ENCODE measurements at regions of chr14 and their contacts with region 1.

Region 1: DNA sequence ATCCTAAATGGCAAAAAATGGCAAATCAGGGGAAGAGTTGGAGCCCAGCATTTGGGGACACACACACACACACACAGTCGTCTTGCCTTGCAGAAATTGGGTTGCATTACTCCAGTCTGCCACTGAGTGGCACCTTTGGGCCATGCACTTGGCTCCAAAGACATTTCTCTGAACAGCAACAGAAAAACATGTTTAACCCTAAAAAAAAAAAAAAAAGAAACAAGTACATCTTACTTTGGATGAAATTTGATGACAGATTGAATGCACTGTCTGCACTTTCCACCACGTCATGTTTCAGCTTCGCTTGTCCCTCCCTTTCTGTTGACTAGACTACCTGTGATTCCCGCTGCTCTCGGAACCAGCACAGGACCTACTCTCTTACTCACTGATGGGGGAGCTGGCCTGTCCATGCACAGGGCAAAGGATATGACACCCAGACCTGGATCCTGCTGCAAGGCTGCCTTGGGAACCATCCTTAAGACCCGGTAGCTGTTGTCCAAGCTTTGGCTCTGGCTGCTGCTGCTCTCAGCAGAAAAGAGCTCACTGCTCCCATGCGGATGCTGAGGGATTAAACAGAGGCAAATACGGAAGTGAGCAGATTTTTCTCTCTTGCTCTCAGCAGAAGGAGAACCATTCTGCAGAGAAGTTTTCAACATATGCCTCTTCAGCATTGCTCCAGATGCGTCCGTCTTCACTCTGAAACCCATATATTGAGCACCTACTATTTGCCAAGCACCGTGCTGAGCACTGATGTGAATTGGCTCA is 376.8 kb downstream of the DPF3 start:
- DNase-seq: peak; percentile 63 to 65
- ATAC-seq: peak; percentile 84 to 92 (median 86)
- H3K4me3 ChIP-seq: no peak overlapping the region
- H3K27ac ChIP-seq: no peak overlapping the region
- H3K4me1 ChIP-seq: peaks cover 2% of the 10 kb centered on the region
- H3K27me3 ChIP-seq: no peaks in the 10 kb centered on the region
- CTCF ChIP-seq: peak; percentile 87

Region 2: DNA sequence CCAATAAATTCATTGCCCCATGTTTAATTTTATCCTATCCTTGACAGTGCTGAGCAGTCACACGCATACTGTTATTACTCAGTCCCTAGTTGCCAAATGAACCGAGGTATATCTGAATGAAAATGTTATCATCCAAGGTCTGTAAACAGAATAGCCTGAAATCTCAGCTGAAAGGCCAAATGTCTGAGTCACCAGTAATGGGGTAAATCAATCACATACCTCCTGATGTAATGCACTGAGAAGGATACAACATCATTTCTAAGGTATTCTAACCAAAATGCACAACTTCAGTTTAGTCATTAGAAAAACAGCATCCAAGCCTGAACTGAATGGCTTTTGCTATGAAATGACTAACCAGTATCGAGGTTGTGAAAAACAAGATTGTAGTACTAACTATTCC is 148.1 kb after region 1 on chr14:
- intact Hi-C with region 1: loop called in 1 of 2 experiments (anchors 5 kb)
- DNase-seq: no peak
- ATAC-seq: peak in 3 of 4 donors; percentile 33 to 53 (median 41)
- H3K4me3 ChIP-seq: no peak overlapping the region
- H3K27ac ChIP-seq: peak overlapping the region; percentile 1
- H3K4me1 ChIP-seq: no peaks in the 10 kb centered on the region
- H3K27me3 ChIP-seq: no peaks in the 10 kb centered on the region
- CTCF ChIP-seq: no peak

Region 3: DNA sequence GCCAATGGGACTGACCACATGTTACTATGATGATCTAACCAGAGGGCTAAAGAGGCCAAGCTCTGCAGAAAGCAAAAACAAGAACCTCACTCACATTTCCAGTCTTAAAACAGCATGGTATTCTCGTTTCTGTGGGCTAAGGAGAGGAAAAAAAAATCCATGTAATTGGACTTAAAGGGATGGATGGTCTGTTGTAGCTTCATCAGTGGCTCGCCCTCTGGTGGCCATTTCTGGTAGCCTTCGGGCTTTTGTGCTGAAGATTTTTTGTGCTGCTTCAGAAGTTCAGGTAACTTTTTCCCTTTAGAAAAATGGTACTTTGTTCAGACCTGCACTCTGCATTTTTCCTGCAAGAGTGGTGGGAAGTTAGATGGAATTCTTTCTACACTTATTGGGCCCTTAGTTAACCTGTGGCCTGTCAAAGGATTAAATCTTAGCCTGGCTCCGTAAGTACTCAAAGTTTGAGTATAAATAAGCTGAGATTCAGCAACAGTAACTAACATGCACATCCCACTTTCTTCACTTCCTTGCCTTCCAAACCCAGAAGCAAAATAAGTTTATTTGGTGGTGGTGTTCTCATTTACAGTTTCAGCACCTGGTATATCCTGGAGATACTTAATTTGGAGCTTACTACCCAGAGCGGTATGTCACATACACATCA is 431.5 kb after region 1 on chr14:
- intact Hi-C with region 1: loop called (anchors 1 to 2 kb)
- DNase-seq: peak; percentile 56 to 75
- ATAC-seq: peak in 3 of 4 donors; percentile 56 to 80 (median 63)
- H3K4me3 ChIP-seq: no peak overlapping the region
- H3K27ac ChIP-seq: no peak overlapping the region
- H3K4me1 ChIP-seq: no peaks in the 10 kb centered on the region
- H3K27me3 ChIP-seq: no peaks in the 10 kb centered on the region
- CTCF ChIP-seq: peak; percentile 85

Measured in psoas muscle (tissue), 8 donors.